MCF 10A (cell line): ENCODE measurements at regions of chr3 and their contacts with region 1.

Region 1: GRCh38 chr3:149401215-149401925 is 23.9 kb upstream of the TM4SF1 start:
- DNase-seq: peak; percentile 80
- H3K4me3 Mint-ChIP-seq: no peak overlapping the region
- H3K27ac Mint-ChIP-seq: peak overlapping the region; percentile 67
- H3K4me1 Mint-ChIP-seq: peaks cover 8% of the 10 kb centered on the region
- H3K27me3 Mint-ChIP-seq: no peaks in the 10 kb centered on the region
- CTCF ChIP-seq: no peak

Region 2: DNA sequence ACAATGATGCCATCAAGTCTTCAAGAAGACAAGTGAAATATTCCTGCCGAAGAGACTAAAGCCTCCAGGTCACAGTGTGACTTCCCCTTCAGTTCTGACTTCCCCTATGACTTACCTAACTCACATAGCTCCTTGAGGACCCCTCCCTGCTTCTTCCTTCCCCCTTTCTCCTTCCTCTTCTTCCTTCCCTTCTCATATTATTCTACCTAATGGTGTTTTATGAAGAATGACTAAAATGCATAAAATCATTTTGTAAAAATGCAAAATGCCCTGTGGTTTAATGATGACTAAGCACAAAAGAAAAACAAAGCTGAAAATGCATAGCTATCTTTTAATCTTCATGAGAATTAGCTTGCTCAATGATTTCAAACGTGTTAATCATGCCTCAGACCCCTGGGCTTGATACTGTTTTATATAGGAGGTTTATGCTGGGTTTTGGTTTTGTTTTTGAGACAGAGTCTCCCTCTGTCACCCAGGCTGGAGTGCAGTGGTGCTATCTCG is 47.0 kb after region 1 on chr3:
- CTCF ChIA-PET with region 1: interaction called, 4 read pairs
- POLR2A ChIA-PET with region 1: interaction called, 14 read pairs
- intact Hi-C with region 1: no loop called
- DNase-seq: peak; percentile 64
- H3K4me3 Mint-ChIP-seq: no peak overlapping the region
- H3K27ac Mint-ChIP-seq: peak overlapping the region; percentile 74
- H3K4me1 Mint-ChIP-seq: peaks cover 20% of the 10 kb centered on the region
- H3K27me3 Mint-ChIP-seq: no peaks in the 10 kb centered on the region
- CTCF ChIP-seq: no peak